Activated CD8-positive, alpha-beta memory T cell treated with anti-CD3 and anti-CD28 coated beads, Interleukin-2, amount 10 ng/mL, durations not matched to agents 7 days and 5 days (primary cell): ENCODE measurements at regions of chr11 and their contacts with region 1.

Region 1: GRCh38 chr11:73779084-73779902 is 8.4 kb upstream of the MRPL48 start:
- DNase-seq: peak; percentile 99
- ATAC-seq: peak; percentile 99
- H3K4me3 Mint-ChIP-seq: peak overlapping the region; percentile 86
- H3K27ac Mint-ChIP-seq: peak overlapping the region; percentile 99
- H3K4me1 Mint-ChIP-seq: peaks cover 19% of the 10 kb centered on the region
- H3K27me3 Mint-ChIP-seq: no peaks in the 10 kb centered on the region

Region 2: DNA sequence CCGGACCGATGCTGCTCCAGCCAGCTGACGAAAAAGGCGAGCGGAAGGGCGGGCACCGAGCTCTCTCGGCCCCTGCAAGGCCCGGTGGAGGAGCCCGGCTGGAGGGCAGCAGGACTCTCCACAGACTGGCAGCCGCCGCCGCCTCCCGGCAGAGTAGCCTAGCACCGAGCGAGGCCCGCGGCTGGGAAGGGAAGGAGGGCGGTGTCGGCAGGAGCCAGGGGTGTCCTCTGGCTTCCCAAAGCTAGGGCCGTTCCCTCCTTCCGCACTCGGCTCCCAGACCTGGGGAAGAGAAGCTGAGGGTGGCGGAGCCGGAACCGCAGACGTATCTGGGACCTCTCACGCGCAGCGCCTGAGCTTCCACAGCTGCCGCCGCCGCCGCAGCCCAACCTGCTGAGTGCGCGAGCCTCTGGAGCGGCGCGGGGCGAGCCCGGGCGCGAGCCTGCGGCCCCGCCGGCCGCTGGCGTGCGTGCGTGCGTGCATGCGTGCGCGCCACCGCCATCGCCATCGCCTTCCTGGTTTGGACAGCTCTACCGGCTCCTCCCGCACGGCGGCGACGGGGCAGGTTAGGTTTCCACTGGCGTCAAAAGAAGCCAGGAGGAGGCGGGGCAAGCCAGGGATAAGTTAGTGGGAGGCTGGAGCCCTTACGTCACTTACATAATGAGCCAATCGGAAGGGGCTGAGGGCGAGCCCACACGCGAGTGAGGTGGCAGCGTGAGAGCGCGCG is 18.5 kb before region 1 on chr11 and contains the start of gene RAB6A:
- CTCF ChIA-PET with region 1: interaction called, 59 read pairs
- DNase-seq: peak; percentile 100
- ATAC-seq: peak; percentile 95
- H3K4me3 Mint-ChIP-seq: peak within 1 kb of the TSS; percentile 88
- H3K27ac Mint-ChIP-seq: peak within 1 kb of the TSS; percentile 87
- H3K4me1 Mint-ChIP-seq: peaks cover 25% of the 10 kb centered on the region
- H3K27me3 Mint-ChIP-seq: peaks cover 5% of the 10 kb centered on the region
- total RNA-seq, gene RAB6A: 85.3 to 94.2 TPM